Mammary epithelial cell (primary cell): ENCODE measurements at regions of chr14 and their contacts with region 1.

Region 1: DNA sequence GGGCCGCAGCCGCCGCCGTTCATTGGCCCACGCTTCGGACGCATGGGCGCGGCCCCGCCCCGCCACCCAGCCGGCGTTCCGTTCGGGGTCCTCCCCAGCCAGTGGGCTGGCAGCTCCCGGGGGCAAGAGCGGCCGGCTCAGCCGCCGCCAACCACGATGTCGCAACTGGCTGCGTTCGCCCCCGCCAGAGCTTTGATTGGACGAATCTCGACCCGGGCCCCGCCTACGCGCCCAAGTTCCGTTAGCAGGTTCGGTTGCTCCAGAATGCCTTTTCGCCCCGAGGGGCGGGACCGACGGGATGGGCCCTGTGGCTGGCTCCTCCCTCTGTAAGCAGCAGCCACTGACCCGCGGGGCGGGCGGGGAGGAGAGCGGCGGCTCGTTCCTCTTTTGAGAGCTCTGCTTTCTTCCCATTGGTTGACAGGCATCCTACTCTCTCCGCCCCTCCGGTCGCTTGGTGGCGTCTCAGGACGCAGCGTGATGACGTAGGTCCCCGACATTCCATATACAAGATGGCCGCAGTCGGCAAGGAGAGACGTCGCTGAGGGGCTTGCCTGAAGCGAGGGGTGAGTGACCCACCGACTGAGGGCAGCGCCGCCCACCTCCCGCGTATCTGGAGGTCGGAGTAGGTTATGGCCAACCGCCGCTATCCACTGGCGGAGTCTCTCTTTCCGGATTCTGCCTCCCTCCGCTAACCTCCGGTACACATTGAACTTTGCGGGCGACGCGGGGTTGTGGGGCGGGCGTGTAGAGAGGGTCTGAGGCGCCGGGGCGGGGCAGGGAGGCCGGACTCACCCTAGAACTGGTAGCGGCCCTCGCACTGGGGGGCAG is at the start of gene CCNK:
- DNase-seq: peak; percentile 100
- H3K4me3 ChIP-seq: peak within 1 kb of the TSS; percentile 78 to 94 (median 84)
- H3K27ac ChIP-seq: peak within 1 kb of the TSS; percentile 86
- H3K4me1 ChIP-seq: peaks cover 33% of the 10 kb centered on the region
- H3K27me3 ChIP-seq: no peaks in the 10 kb centered on the region
- CTCF ChIP-seq: no peak
- total RNA-seq, gene CCNK: 27.0 to 85.4 TPM

Region 2: DNA sequence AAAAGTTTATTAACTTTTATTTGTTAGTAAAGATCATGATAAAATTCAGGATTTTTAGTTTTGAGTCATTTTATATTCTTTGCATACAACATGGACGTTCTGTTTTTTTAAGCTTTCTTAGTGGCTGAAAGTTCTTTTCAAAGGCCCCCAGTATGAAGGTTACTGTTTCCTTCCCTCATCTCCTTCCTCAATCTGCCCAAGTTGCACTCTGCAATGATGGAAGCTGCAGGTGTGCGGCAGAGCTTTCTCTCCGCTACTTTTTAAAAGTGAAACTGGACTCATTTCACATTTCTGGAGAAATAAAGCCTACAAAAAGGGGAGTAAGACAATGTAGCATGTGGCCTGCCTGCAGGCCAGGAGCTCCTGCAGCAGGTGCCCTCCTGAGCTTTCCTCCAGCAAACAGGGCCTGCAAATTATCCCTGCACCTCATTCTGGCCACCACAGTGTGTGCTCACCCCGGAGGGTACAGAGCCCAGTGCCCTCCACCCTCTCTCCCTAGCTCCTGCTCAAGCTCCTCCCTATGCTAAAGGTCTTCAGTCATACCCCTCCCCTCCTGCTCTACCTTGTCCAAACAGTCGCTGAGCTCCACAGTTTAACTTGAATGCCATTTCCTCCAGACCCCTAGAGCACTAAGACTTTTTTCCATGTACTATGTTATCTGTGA is 79.4 kb before region 1 on chr14:
- CTCF ChIA-PET with region 1: no interaction called
- dilution Hi-C with region 1: loop called (anchors 5 kb)
- in situ Hi-C with region 1: no loop called
- intact Hi-C with region 1: no loop called
- DNase-seq: no peak
- H3K4me3 ChIP-seq: no peak overlapping the region
- H3K27ac ChIP-seq: no peak overlapping the region
- H3K4me1 ChIP-seq: no peaks in the 10 kb centered on the region
- H3K27me3 ChIP-seq: no peaks in the 10 kb centered on the region
- CTCF ChIP-seq: no peak

Region 3: DNA sequence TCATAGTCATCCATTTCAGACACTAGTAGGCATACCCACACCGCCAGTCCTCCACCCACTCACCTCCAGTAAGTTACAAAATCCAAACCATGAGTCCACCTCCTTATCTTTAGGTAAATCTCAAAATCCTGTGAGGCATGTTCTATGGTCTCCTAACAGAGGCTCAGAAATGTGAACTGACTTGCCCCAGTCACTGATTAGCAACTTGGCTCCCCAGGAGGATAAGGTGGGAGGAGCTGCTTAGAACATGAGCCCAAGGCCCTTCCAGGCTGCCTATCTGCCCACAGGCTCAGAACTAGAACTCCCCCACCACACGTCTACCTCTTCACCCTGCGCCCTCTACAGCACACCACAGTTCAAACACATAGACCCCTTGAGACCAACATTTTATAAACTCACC is 20.3 kb before region 1 on chr14:
- CTCF ChIA-PET with region 1: no interaction called
- dilution Hi-C with region 1: no loop called
- in situ Hi-C with region 1: no loop called
- intact Hi-C with region 1: loop called (anchors 1 kb)
- DNase-seq: peak; percentile 95
- H3K4me3 ChIP-seq: no peak overlapping the region
- H3K27ac ChIP-seq: peak overlapping the region; percentile 25
- H3K4me1 ChIP-seq: peaks cover 27% of the 10 kb centered on the region
- H3K27me3 ChIP-seq: no peaks in the 10 kb centered on the region
- CTCF ChIP-seq: no peak